HAP-1 (cell line): ENCODE measurements at regions of chr10 and their contacts with region 1.

Region 1: GRCh38 chr10:97210543-97210961 is 24.8 kb upstream of the SLIT1 start:
- DNase-seq: peak; percentile 67 to 85
- H3K4me3 ChIP-seq: no peak overlapping the region
- H3K4me1 ChIP-seq: no peaks in the 10 kb centered on the region
- H3K27me3 ChIP-seq: peaks cover 7% of the 10 kb centered on the region; the same call in 1 of the 2 replicates

Region 2: GRCh38 chr10:96642973-96643372 is 567.6 kb before region 1 on chr10:
- in situ Hi-C with region 1: loop called (anchors 25 kb)
- DNase-seq: peak; percentile 12 to 79
- H3K4me3 ChIP-seq: no peak overlapping the region
- H3K4me1 ChIP-seq: no peaks in the 10 kb centered on the region
- H3K27me3 ChIP-seq: no peaks in the 10 kb centered on the region

Region 3: DNA sequence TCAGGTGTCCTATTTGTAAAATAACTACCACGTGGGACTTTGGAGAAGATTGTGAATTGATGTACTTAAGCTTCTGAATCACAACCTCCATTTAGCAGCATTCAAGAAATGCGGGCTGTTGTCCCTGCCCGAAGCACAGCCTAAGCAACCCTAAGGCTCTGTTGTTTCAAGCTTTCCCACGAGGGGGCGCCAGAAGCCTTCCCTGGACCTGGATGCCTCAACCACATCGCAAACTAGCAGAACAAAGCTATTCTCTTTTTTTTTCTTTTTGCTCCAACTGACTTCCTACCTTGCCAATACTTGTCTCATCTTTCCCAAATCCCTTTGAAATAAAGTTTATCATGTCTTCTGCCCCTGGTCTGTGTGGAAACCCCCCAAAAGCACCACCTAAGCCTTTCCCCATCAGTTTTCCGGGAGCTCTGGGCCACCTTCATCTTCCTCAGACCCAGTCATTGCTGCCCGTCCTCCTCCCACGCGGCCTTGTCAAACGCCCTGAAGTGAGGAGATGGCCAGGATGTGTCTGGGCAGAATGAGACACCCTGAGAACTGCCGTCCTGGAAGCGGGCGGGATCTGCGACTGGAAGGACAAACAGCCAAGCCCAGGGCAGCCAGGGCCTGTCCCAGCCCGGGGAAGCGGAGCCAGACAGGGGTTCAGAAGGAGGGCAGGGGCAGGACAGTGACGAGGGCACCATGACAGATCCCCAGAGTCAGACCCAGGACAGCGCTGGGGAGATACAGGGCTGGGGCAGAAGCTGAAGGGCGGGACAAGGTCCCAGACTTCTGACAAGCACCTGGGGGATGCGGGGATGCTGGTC is 137.5 kb before region 1 on chr10:
- in situ Hi-C with region 1: loop called (anchors 5 kb)
- DNase-seq: peak; percentile 56 to 89
- H3K4me3 ChIP-seq: no peak overlapping the region
- H3K4me1 ChIP-seq: no peaks in the 10 kb centered on the region
- H3K27me3 ChIP-seq: peaks cover 11% of the 10 kb centered on the region